ENCODE measurements at regions of chr22 and their contacts with region 1.

Region 1: DNA sequence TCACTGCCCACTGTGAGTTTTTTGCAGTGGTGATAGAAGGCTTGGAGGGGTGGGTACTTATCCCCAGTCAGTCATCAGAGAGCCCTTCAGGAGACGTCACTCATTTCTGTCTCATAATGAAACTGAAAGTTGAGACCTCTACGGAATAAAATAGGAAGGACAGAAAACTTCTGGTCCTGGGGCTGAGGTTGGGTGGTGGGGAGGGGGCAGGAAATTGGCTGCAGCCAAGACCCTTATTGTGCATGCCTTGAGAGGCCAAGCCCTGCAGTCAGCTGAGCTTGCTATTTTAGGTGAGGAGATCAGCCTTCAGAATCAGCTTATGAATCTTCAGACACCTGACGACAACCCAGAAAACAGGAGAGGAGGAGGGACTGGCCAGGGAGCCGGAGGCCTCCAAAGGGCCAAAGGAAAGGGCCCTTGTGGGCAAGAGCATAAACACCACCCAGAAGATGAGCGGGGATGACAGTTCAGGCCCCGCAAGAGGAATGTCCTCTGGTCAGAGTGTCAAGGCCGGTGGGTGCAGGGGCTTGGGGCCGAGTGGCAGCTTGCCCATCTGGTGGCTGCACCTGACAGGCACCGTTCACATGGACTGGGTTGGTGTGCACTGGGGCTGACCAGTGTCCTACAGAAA is 17.9 kb upstream of the ADA2 start:
- DNase-seq: no peak
- H3K4me3 ChIP-seq: no peak overlapping the region
- H3K27ac ChIP-seq: no peak overlapping the region
- H3K4me1 ChIP-seq: peaks cover 8 to 22% (median 15%) of the 10 kb centered on the region in 4 experiments
- H3K27me3 ChIP-seq: no peaks in the 10 kb centered on the region
- CTCF ChIP-seq: no peak
- EP300 ChIP-seq: no peak
- POLR2A ChIP-seq: no peak
- RAD21 ChIP-seq: no peak

Region 2: GRCh38 chr22:17199003-17199731 is 38.0 kb before region 1 on chr22:
- CTCF ChIA-PET with region 1: interaction called, 4 read pairs
- POLR2A ChIA-PET with region 1: interaction called, 45 read pairs
- DNase-seq: peak; percentile 50 to 77
- H3K4me3 ChIP-seq: peak overlapping the region; percentile 47 to 65 (median 56); a peak in 7 of 8 replicates
- H3K27ac ChIP-seq: peak overlapping the region; percentile 99
- H3K4me1 ChIP-seq: peaks cover 16 to 31% (median 19%) of the 10 kb centered on the region in 4 experiments
- H3K27me3 ChIP-seq: no peaks in the 10 kb centered on the region
- CTCF ChIP-seq: no peak
- EP300 ChIP-seq: peak in 1 of 2 experiments; percentile 78; a peak in 1 of 3 replicates
- POLR2A ChIP-seq: peak; percentile 25 to 97
- RAD21 ChIP-seq: no peak

Region 3: GRCh38 chr22:17213976-17214375 is 23.2 kb before region 1 on chr22:
- CTCF ChIA-PET with region 1: interaction called, 16 read pairs
- POLR2A ChIA-PET with region 1: interaction called, 4 read pairs
- DNase-seq: peak in 1 of 2 experiments; percentile 72
- H3K4me3 ChIP-seq: no peak overlapping the region
- H3K27ac ChIP-seq: no peak overlapping the region
- H3K4me1 ChIP-seq: peaks cover 5 to 11% (median 8%) of the 10 kb centered on the region in 4 experiments; a peak in 6 of 7 replicates
- H3K27me3 ChIP-seq: no peaks in the 10 kb centered on the region
- CTCF ChIP-seq: peak; percentile 67 to 81 (median 77)
- EP300 ChIP-seq: no peak
- POLR2A ChIP-seq: no peak
- RAD21 ChIP-seq: peak; percentile 56 to 67

Region 4: GRCh38 chr22:17250380-17251090 is 13.4 kb after region 1 on chr22:
- CTCF ChIA-PET with region 1: interaction called, 4 read pairs
- POLR2A ChIA-PET with region 1: interaction called, 72 read pairs
- DNase-seq: no peak
- H3K4me3 ChIP-seq: no peak overlapping the region
- H3K27ac ChIP-seq: no peak overlapping the region
- H3K4me1 ChIP-seq: peaks cover 0 to 3% (median 3%) of the 10 kb centered on the region in 4 experiments; a peak in 3 of 7 replicates
- H3K27me3 ChIP-seq: no peaks in the 10 kb centered on the region
- CTCF ChIP-seq: no peak
- EP300 ChIP-seq: no peak
- POLR2A ChIP-seq: no peak
- RAD21 ChIP-seq: peak in 1 of 2 experiments; percentile 12; a peak in 1 of 4 replicates

Region 5: DNA sequence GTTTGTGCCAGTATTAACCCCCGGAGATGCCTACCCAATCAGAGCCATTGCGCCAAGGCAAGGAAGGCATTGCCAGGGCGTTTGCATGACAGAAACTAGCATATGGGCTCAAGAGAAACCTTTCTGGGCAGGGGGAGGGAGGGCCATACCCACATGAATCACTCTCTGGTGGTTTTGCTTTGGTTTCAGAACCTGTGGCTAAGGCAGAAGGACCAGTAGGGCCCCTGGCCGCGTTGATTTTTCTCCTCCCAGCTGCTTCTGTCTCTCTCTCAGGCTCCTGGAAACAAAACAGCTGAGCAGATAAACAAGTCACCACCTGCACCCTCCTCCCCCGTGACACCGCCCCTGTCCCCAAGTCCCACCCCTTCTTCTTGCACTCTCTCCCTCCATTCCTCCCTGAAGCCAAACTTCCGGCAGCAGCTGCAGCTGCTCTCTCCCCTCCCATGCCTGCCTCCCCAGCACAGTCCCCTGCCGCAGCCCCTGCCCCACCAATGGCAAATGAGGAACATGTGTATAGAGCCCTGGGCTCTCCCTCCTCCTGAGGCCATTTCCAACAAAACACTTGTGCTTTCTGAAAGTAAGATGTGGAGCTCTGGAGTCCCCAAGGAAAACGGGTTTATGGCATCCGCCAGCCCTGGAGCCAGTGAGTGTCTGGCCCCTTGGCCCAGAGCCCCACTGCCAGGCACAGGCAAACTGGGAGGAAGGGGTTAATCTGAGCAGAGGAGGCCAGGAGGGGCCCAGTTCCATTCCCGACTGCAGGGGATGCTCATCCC is 21.0 kb after region 1 on chr22:
- CTCF ChIA-PET with region 1: interaction called, 13 read pairs
- POLR2A ChIA-PET with region 1: interaction called, 72 read pairs
- DNase-seq: peak in 1 of 2 experiments; percentile 74
- H3K4me3 ChIP-seq: peak overlapping the region in 3 of 4 experiments; percentile 2 to 40 (median 8); a peak in 4 of 8 replicates
- H3K27ac ChIP-seq: peak overlapping the region; percentile 77
- H3K4me1 ChIP-seq: peaks cover 26 to 42% (median 32%) of the 10 kb centered on the region in 4 experiments
- H3K27me3 ChIP-seq: no peaks in the 10 kb centered on the region
- CTCF ChIP-seq: no peak
- EP300 ChIP-seq: no peak
- POLR2A ChIP-seq: no peak
- RAD21 ChIP-seq: no peak; a peak in 1 of 4 replicates

Region 6: GRCh38 chr22:17266251-17266971 is 29.3 kb after region 1 on chr22:
- CTCF ChIA-PET with region 1: interaction called, 13 read pairs
- POLR2A ChIA-PET with region 1: interaction called, 72 read pairs
- DNase-seq: peak in 1 of 2 experiments; percentile 71
- H3K4me3 ChIP-seq: peak overlapping the region in 3 of 4 experiments; percentile 5 to 41 (median 10); a peak in 4 of 8 replicates
- H3K27ac ChIP-seq: peak overlapping the region; percentile 34
- H3K4me1 ChIP-seq: peaks cover 32 to 63% (median 45%) of the 10 kb centered on the region in 4 experiments
- H3K27me3 ChIP-seq: no peaks in the 10 kb centered on the region
- CTCF ChIP-seq: no peak
- EP300 ChIP-seq: no peak
- POLR2A ChIP-seq: no peak; a peak in 1 of 3 replicates
- RAD21 ChIP-seq: no peak

Region 7: GRCh38 chr22:17368554-17369438 is 131.6 kb after region 1 on chr22:
- CTCF ChIA-PET with region 1: interaction called, 3 read pairs
- POLR2A ChIA-PET with region 1: interaction called, 22 read pairs
- DNase-seq: peak; percentile 60 to 84
- H3K4me3 ChIP-seq: peak overlapping the region; percentile 65 to 92 (median 81)
- H3K27ac ChIP-seq: peak overlapping the region; percentile 91
- H3K4me1 ChIP-seq: peaks cover under 1 to 15% (median 6%) of the 10 kb centered on the region in 4 experiments; a peak in 6 of 7 replicates
- H3K27me3 ChIP-seq: no peaks in the 10 kb centered on the region
- CTCF ChIP-seq: no peak
- EP300 ChIP-seq: peak in 1 of 2 experiments; percentile 89; a peak in 2 of 3 replicates
- POLR2A ChIP-seq: peak; percentile 18 to 85
- RAD21 ChIP-seq: peak in 1 of 2 experiments; percentile 3; a peak in 2 of 4 replicates

Measured in H1 (cell line).